ENCODE measurements at regions of chr15 and their contacts with region 1.

Region 1: DNA sequence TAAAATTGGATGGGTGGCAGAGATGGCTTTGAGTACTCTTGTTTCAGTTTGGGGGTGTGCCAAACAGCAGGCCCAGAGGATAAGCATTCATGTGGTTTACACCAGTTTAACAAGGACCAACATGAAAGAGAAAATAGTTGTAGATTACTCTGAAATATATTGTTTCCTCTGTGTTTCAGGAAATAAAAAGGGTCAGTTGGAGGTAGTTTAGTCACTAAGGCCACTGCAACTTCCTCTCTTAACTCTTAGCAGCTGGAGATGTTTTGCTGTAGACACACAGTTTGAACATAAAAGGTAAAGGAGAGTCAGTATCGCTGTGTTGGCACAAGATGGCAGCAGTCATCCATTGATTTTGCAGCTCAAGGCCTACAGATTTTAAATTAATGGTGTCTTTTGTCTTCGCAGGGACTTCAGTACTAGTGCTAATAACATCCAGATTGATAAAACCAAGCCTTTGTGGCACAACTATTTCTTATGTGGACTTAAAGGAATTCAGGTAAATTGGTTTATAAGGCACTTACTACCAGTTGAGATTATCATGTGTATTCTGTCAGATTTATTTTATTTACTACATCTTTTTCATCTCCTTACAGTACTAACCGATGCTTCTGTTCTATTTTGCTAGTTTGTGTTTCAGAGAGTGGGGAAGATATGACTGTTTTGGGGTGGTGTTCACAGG is 65.5 kb downstream of the GALK2 start:
- DNase-seq: no peak
- ATAC-seq: peak; percentile 65
- H3K4me3 Mint-ChIP-seq: no peak overlapping the region
- H3K27ac Mint-ChIP-seq: no peak overlapping the region
- H3K4me1 Mint-ChIP-seq: peaks cover 11% of the 10 kb centered on the region
- H3K27me3 Mint-ChIP-seq: no peaks in the 10 kb centered on the region
- CTCF ChIP-seq: no peak

Region 2: DNA sequence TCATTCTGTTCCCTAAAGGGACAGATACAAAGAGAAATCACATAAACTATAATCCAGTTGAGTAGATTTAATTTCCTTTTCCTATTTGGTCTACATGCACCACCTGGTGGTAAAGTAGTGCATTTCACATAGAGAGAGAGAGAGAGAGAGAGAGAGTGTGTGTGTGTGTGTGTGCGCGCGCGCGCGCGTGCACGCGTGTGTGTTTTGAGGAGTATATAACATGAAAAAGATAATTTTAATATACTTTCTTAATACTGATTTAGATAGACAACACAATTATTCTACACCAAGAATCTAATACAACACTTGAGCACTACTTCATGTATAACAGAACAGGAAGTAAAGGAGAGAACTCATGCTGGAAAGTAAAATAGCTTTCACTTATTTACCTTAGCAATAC is 186.4 kb after region 1 on chr15:
- CTCF ChIA-PET with region 1: interaction called, 37 read pairs
- POLR2A ChIA-PET with region 1: no interaction called
- intact Hi-C with region 1: loop called (anchors 1 kb)
- DNase-seq: peak; percentile 18
- ATAC-seq: peak; percentile 42
- H3K4me3 Mint-ChIP-seq: no peak overlapping the region
- H3K27ac Mint-ChIP-seq: no peak overlapping the region
- H3K4me1 Mint-ChIP-seq: peaks cover 3% of the 10 kb centered on the region
- H3K27me3 Mint-ChIP-seq: peaks cover 3% of the 10 kb centered on the region
- CTCF ChIP-seq: no peak

Region 3: DNA sequence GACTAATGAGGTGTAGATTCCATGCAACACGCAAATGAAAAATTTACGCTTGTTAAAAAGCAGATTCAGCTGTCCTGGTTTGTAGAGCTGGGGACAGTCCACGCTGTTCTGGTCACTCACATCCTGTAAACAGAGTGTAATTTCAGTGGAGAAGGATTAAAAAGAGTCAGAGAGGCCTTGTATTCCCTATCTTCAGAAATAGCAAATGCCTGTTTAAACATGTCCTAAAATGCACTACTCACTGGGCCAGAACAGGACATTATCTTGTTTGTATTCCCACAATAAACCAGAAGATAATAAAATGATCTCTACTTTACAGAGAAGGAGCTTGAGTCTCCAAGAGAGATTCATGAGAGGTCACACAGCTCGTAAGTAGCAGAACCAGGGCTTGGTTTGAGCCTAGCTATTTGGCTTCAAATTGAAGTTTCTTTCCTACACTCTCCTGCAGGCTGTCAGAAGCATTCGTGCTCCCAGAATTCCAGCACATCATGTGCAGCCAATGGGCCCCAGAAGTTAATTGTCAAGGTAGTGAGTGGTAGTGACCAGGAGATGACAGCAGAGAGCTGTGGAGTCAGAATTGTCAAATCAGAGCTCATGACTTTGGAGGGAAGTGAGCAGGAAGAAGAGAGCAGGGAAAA is 640.9 kb after region 1 on chr15:
- CTCF ChIA-PET with region 1: no interaction called
- POLR2A ChIA-PET with region 1: no interaction called
- intact Hi-C with region 1: loop called (anchors 10 kb)
- DNase-seq: no peak
- ATAC-seq: no peak
- H3K4me3 Mint-ChIP-seq: no peak overlapping the region
- H3K27ac Mint-ChIP-seq: no peak overlapping the region
- H3K4me1 Mint-ChIP-seq: no peaks in the 10 kb centered on the region
- H3K27me3 Mint-ChIP-seq: no peaks in the 10 kb centered on the region
- CTCF ChIP-seq: no peak

Region 4: GRCh38 chr15:50051803-50052419 is 816.3 kb after region 1 on chr15:
- CTCF ChIA-PET with region 1: no interaction called
- POLR2A ChIA-PET with region 1: no interaction called
- intact Hi-C with region 1: loop called (anchors 5 kb)
- DNase-seq: no peak
- ATAC-seq: no peak
- H3K4me3 Mint-ChIP-seq: no peak overlapping the region
- H3K27ac Mint-ChIP-seq: no peak overlapping the region
- H3K4me1 Mint-ChIP-seq: no peaks in the 10 kb centered on the region
- H3K27me3 Mint-ChIP-seq: no peaks in the 10 kb centered on the region
- CTCF ChIP-seq: no peak

Region 5: DNA sequence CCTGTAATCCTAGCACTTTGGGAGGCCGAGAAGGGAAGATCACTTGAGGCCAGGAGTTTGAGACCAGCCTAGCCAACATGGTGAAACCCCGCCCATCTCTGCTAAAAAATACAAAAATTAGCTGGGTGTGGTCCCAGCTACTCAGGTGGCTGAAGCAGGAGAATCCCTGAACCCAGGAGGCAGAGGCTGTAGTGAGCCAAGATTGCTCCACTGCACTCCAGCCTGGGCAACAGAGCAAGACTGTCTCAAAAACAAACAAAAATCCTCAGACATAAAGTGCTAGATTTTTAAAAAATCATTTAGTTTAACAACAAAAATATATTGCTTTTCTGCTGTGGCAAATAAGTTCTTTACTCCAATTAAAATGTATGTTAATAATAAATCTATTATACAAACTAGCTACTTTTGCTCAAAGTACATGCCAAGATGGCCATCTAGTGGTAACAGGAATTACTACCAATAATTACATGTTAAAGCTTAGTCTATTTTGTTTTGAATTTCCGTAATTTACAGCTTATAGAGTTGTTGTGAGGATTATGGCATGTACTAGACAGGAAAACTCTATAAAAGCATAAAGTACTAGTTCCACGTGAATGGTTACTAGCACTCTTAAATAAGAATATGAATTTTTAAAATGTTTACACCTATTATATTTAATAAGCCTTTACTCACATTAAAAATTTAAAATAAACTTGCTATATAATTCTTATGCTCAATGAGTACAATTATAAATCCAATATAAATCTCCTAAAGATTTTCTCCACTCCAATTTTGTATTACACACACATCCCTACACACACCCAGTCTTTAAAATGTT is 1080.4 kb after region 1 on chr15:
- CTCF ChIA-PET with region 1: interaction called, 3 read pairs
- POLR2A ChIA-PET with region 1: no interaction called
- intact Hi-C with region 1: loop called (anchors 10 kb)
- DNase-seq: no peak
- ATAC-seq: peak; percentile 54
- H3K4me3 Mint-ChIP-seq: no peak overlapping the region
- H3K27ac Mint-ChIP-seq: no peak overlapping the region
- H3K4me1 Mint-ChIP-seq: peaks cover 7% of the 10 kb centered on the region
- H3K27me3 Mint-ChIP-seq: no peaks in the 10 kb centered on the region
- CTCF ChIP-seq: no peak